ENCODE measurements at regions of chr22 and their contacts with region 1.

Region 1: DNA sequence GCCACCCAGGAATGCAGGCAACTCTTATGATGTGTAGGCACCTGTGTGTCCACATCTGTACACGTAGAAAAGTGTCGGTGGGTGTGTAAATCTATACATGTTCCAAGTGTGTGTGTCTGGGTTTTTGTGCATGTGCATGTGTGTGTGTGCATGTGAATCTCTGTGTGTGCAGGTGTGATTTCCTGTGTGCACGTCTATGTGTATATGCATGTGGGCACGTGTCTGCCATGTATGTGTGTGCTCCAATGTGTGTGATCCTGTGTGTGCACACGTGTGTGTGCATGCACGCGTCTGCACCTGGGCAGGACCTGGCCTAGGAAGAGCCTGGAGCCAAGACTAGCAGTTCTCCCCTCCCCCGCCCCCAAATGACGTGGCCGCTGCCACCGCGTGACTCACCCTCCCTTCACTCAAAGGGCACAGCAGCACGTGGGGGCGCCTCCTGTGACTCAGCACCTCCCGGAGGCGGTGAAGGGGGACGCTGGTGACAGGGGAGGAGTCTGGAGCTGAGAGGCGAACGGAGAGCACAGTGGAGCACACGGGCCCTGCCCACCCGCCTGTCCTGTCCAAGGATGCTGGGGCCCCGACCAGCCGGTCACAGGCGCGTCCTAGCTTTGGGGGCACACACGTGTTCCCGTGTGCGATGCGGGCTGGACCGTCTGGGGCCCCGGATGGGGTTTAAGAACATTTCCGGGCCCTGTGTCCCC is 10.1 kb downstream of the PIM3 start:
- DNase-seq: peak; percentile 99
- H3K4me3 ChIP-seq: peak overlapping the region in 1 of 3 donors; percentile 53
- H3K27ac ChIP-seq: peak overlapping the region; percentile 86 to 97 (median 94)
- H3K4me1 ChIP-seq: peaks cover 40 to 65% of the 10 kb centered on the region in 2 donors
- H3K27me3 ChIP-seq: no peaks in the 10 kb centered on the region
- CTCF ChIP-seq: peak in 1 of 6 experiments; percentile 25
- POLR2A ChIP-seq: peak; percentile 85 to 96

Region 2: GRCh38 chr22:49760630-49761571 is 209.8 kb before region 1 on chr22:
- intact Hi-C with region 1: no loop called
- DNase-seq: no peak
- H3K4me3 ChIP-seq: no peak overlapping the region
- H3K27ac ChIP-seq: no peak overlapping the region
- H3K4me1 ChIP-seq: no peaks in the 10 kb centered on the region
- H3K27me3 ChIP-seq: no peaks in the 10 kb centered on the region
- CTCF ChIP-seq: no peak
- POLR2A ChIP-seq: no peak

Region 3: DNA sequence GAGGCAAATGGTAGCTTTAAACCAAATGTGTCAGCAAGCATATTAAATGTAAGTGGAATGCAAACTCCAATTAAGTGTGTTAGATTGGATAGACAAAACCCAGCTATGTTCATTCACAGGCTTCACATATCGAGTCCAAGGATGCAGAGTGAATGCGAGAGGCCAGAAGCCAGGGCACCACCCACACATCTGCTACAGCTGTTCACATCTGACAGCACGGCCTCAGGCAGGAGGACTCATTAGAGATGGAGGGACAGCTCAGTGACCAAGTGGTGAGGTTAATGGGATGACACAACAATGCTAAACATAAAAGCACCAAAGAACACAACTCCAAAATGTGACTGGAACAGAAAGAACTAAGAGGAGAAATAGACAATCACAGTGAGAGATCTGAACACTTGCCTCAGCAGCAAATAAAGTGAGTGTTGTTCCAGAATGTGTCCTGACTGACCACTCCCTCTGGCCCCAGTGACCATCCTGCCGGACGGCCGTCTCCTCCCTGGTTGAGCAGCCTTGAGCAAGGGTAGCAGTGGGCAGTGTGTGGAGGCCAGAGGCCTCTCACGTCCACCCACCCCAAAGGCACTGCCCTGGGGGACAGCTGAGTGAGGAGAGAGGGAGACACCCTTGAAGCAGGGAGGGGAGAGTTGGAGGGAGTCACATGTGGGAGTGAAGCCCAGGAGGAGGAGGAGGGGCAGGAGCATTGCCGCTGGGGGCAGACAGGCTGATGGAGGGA is 76.2 kb before region 1 on chr22:
- intact Hi-C with region 1: no loop called
- DNase-seq: no peak
- H3K4me3 ChIP-seq: no peak overlapping the region
- H3K27ac ChIP-seq: no peak overlapping the region
- H3K4me1 ChIP-seq: peaks cover 0 to 3% of the 10 kb centered on the region in 2 donors
- H3K27me3 ChIP-seq: no peaks in the 10 kb centered on the region
- CTCF ChIP-seq: no peak
- POLR2A ChIP-seq: no peak

Region 4: GRCh38 chr22:49934891-49935557 is 35.7 kb before region 1 on chr22:
- intact Hi-C with region 1: loop called (anchors 2 kb)
- DNase-seq: peak; percentile 85 to 88
- H3K4me3 ChIP-seq: peak overlapping the region in 2 of 3 donors; percentile 24 to 44
- H3K27ac ChIP-seq: peak overlapping the region; percentile 96 to 99 (median 96)
- H3K4me1 ChIP-seq: peaks cover 51 to 79% of the 10 kb centered on the region in 2 donors
- H3K27me3 ChIP-seq: no peaks in the 10 kb centered on the region
- CTCF ChIP-seq: no peak
- POLR2A ChIP-seq: no peak